ENCODE measurements at regions of chr5 and their contacts with region 1.

Region 1: DNA sequence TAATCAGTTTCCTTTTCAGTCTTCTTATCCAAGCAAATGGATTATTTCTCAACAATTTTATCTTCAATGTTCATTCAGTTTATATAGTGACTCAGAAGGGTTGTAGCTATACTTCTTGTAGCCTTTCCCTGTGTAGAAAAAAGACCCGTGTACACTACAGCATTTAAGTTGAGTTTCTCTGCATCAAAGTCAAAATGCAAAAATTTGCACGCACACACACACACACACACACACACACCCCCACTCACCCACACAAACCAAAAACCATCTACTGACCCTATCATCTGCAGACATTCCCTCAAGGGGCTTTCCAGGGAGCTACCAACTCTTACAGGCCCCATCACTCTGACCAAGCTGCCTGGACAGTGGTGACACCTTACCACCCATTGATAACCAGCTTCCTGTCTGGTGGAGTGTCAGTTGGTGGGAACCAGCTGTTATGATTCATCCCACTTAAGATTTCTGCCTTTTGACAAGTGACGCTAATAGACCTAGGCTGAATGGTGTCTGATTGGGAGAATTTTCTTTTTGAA is 12.2 kb upstream of the ELL2 start:
- DNase-seq: peak; percentile 66
- ATAC-seq: peak; percentile 94 to 98 (median 98)
- H3K4me3 ChIP-seq: no peak overlapping the region
- H3K4me3 Mint-ChIP-seq: peak overlapping the region; percentile 67
- H3K27ac ChIP-seq: no peak overlapping the region
- H3K27ac Mint-ChIP-seq: peak overlapping the region; percentile 85 to 87
- H3K4me1 ChIP-seq: peaks cover 6% of the 10 kb centered on the region
- H3K4me1 Mint-ChIP-seq: peaks cover 20 to 21% of the 10 kb centered on the region in 2 donors
- H3K27me3 ChIP-seq: no peaks in the 10 kb centered on the region
- H3K27me3 Mint-ChIP-seq: peaks cover 0 to 15% of the 10 kb centered on the region in 2 donors
- CTCF ChIP-seq: no peak

Region 2: DNA sequence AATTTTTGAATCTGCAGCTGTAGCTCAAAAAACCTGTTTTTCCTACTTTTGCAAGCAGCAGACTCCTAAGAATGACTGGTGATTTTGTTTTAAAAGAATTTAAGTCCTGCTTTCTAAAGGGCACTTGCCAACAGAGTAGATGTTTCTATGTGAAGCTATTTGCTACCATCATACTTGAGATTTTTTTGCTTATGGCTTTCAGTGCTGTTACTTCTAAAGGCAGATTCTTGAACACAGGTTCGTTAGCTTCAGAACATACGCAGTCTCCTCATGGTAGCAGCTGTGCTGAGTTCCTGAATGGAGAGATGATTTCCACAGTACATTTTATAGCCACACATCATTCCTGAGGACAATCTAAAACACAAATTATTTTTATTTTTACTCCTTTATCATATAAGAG is 12.1 kb after region 1 on chr5:
- intact Hi-C with region 1: no loop called
- DNase-seq: no peak
- ATAC-seq: no peak
- H3K4me3 ChIP-seq: no peak overlapping the region
- H3K4me3 Mint-ChIP-seq: no peak overlapping the region
- H3K27ac ChIP-seq: no peak overlapping the region
- H3K27ac Mint-ChIP-seq: no peak overlapping the region
- H3K4me1 ChIP-seq: peaks cover 5% of the 10 kb centered on the region
- H3K4me1 Mint-ChIP-seq: no peaks in the 10 kb centered on the region
- H3K27me3 ChIP-seq: no peaks in the 10 kb centered on the region
- H3K27me3 Mint-ChIP-seq: no peaks in the 10 kb centered on the region
- CTCF ChIP-seq: no peak

Region 3: DNA sequence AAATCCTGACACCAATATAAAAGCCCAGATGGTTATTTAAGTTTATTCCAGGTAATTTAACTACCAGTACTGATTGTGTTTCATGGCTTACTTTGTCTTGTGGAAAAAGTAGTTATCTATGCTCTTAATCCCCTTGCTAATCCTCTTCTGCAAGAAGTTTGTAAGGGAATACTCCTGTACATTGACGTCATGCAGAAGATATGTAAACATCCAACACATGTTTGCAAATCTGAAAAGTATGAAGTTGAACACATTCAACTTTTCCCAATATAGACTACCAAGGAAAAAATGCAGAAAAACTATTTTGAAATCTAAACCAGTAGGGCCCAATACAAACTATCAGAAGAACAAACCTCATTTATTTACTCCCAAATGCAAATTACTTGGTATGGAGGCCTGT is 44.1 kb after region 1 on chr5:
- intact Hi-C with region 1: no loop called
- DNase-seq: no peak
- ATAC-seq: no peak
- H3K4me3 ChIP-seq: no peak overlapping the region
- H3K4me3 Mint-ChIP-seq: no peak overlapping the region
- H3K27ac ChIP-seq: no peak overlapping the region
- H3K27ac Mint-ChIP-seq: no peak overlapping the region
- H3K4me1 ChIP-seq: no peaks in the 10 kb centered on the region
- H3K4me1 Mint-ChIP-seq: peaks cover 6% of the 10 kb centered on the region in 2 donors
- H3K27me3 ChIP-seq: no peaks in the 10 kb centered on the region
- H3K27me3 Mint-ChIP-seq: peaks cover 0 to 5% of the 10 kb centered on the region in 2 donors
- CTCF ChIP-seq: no peak

Region 4: GRCh38 chr5:96942911-96943310 is 969.1 kb after region 1 on chr5:
- intact Hi-C with region 1: loop called (anchors 5 kb)
- DNase-seq: no peak
- ATAC-seq: no peak
- H3K4me3 ChIP-seq: no peak overlapping the region
- H3K4me3 Mint-ChIP-seq: peak overlapping the region; percentile 38
- H3K27ac ChIP-seq: no peak overlapping the region
- H3K27ac Mint-ChIP-seq: peak overlapping the region; percentile 81 to 92
- H3K4me1 ChIP-seq: peaks cover 35% of the 10 kb centered on the region
- H3K4me1 Mint-ChIP-seq: peaks cover 81 to 82% of the 10 kb centered on the region in 2 donors
- H3K27me3 ChIP-seq: no peaks in the 10 kb centered on the region
- H3K27me3 Mint-ChIP-seq: no peaks in the 10 kb centered on the region
- CTCF ChIP-seq: no peak

Measured in natural killer cell (primary cell).